Activated CD4-positive, alpha-beta memory T cell treated with anti-CD3 and anti-CD28 coated beads, Interleukin-2, amount 10 ng/mL, durations not matched to agents 7 days and 5 days (primary cell): ENCODE measurements at regions of chr6 and their contacts with region 1.

Region 1: DNA sequence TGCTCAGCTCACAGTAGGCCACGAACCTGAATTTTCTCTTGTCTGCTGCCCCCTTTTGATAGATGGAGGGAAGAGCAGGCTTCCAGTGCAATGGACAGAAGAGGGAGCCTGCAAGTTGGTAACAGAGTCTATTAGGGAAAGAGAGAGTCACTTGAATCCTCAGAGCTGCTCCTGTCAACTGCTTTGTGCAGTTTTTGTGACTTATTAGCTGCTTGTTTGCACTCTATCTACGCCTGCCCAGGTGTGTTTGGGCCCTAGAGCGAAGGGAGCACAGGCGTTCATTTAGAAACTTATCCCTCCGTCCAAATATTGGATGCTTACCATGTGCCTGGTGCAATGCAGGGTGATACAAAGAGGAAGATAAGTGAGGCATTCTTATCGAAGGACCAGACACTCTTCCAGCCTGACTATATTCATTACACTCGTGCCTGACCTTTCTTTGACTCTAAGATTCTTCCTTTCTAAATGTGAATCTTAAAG is 11.6 kb upstream of the SLC2A12 start:
- DNase-seq: peak; percentile 64
- H3K4me3 Mint-ChIP-seq: no peak overlapping the region
- H3K27ac Mint-ChIP-seq: no peak overlapping the region
- H3K4me1 Mint-ChIP-seq: no peaks in the 10 kb centered on the region
- H3K27me3 Mint-ChIP-seq: no peaks in the 10 kb centered on the region

Region 2: GRCh38 chr6:133983099-133983939 is 80.7 kb before region 1 on chr6:
- CTCF ChIA-PET with region 1: interaction called, 27 read pairs
- POLR2A ChIA-PET with region 1: no interaction called
- DNase-seq: peak; percentile 63
- H3K4me3 Mint-ChIP-seq: no peak overlapping the region
- H3K27ac Mint-ChIP-seq: peak overlapping the region; percentile 41
- H3K4me1 Mint-ChIP-seq: peaks cover 48% of the 10 kb centered on the region
- H3K27me3 Mint-ChIP-seq: no peaks in the 10 kb centered on the region

Region 3: DNA sequence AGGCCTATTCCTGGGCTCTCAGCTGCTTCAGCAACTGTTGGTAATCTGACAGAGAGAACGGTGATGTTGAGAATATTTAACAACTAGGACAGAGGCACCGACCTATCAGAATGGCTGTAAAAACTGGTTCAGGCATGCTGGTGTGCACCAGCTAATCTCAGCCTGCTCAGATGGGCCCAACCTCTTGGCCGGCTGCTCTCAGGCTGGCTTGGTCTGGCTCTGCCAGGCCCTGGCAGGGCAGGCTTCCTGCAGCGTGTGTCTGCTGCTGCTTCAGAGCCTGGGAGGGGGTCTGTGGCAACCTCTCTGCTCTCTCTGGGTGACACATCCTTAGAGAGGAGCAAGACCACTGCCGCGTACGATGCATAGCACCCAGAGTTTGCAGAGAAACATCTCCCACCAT is 16.3 kb before region 1 on chr6:
- CTCF ChIA-PET with region 1: interaction called, 20 read pairs
- POLR2A ChIA-PET with region 1: no interaction called
- DNase-seq: no peak
- H3K4me3 Mint-ChIP-seq: no peak overlapping the region
- H3K27ac Mint-ChIP-seq: no peak overlapping the region
- H3K4me1 Mint-ChIP-seq: peaks cover 10% of the 10 kb centered on the region
- H3K27me3 Mint-ChIP-seq: peaks cover 24% of the 10 kb centered on the region

Region 4: DNA sequence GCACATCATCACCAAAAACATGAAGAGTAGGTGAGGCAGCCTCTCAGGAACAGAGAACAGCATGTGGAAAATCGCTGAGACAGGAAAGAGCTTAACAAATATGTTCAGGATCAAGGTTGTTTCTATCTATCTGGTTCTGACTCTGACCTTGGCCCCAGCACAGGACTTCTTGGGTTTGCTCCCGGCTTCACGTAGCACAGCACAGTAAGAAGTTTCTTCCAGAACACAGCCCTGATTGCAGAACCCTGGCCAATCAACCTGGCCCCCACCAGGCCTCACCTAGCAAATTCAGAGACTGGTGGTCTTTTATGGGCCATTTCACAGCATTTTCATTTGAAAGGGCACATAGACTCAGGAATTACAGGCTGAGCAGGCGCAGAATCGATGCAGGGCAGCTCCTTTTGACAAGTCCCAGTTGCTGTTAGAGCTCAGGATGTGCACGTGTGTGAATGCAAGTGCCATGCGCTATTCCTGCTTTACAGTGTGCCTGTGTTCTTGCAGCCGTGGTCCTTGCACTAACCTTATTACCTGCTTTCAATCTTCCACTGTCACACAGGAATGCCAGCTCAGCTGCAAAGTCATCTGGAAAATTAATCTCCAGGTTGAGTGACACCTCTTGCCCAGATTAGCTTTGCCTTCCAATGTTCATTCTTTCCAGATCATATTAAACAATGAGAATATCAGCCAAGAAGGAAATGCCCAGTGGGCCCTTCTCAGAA is 88.9 kb after region 1 on chr6:
- CTCF ChIA-PET with region 1: no interaction called
- POLR2A ChIA-PET with region 1: no interaction called
- DNase-seq: no peak
- H3K4me3 Mint-ChIP-seq: no peak overlapping the region
- H3K27ac Mint-ChIP-seq: no peak overlapping the region
- H3K4me1 Mint-ChIP-seq: no peaks in the 10 kb centered on the region
- H3K27me3 Mint-ChIP-seq: no peaks in the 10 kb centered on the region

Region 5: DNA sequence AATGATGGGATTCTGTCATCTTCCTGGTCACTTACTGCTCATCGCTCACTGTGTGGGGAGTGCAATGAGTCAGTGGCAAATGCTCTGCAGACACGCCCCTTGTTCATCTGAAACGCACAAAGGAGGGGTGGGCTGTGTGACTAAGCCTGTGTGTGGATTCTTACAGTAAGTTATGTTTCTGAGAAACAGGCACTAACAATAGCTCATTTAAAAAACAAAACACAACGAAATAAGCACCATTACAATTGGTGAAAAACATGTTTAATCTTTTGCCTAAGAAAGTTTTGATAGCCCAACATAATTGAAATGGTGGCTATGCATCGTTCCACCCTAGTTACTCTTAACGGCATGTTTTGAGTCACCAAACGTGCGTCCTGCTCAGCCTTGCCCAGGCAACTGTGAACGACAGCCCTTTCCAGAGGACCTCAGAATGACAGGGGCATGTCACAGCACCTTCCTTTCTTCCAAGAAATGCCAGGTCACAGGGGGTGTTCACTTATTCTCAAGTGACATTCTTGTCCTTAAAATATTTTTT is 372.3 kb after region 1 on chr6:
- CTCF ChIA-PET with region 1: no interaction called
- POLR2A ChIA-PET with region 1: no interaction called
- DNase-seq: peak; percentile 82
- H3K4me3 Mint-ChIP-seq: peak overlapping the region; percentile 67
- H3K27ac Mint-ChIP-seq: peak overlapping the region; percentile 93
- H3K4me1 Mint-ChIP-seq: peaks cover 36% of the 10 kb centered on the region
- H3K27me3 Mint-ChIP-seq: no peaks in the 10 kb centered on the region